Transverse colon (tissue), 4 donors: ENCODE measurements at regions of chr1 and their contacts with region 1.

Region 1: DNA sequence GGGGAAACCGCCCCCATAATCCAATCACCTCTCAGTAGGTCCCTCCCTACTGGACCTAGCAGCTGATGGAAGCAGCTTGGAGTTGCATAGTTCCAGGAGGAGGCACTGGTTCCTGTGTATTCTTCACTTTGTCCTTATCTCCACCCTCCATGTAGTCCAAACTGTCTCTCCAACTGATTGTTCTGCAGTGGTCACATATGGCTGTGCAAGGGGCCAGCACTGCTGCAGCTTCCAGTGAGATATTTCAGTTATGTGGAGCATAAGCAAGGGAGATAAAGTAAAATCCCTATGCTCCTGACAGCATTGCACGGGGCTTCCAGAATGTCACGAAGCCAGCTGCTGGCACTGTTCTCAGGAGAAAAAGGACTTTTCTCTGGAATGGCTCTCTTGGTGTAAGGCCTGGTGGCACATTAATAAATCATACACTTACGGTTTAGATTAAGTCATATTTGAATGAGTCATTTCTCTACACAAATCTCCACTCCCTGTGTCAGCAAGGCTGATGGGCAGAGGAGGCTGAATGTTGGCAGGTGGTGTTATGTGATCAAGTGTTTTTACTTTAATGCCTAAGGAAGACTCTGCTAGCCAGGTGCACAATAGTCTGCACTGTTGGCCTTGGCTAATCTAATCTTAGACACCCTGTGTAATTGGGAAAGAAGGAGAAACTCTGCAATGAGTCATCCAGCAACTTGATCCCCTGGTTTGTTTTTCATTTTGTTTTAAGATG is 93.4 kb downstream of the KCNK1 start:
- DNase-seq: no peak
- H3K4me3 ChIP-seq: no peak overlapping the region
- H3K27ac ChIP-seq: no peak overlapping the region
- H3K4me1 ChIP-seq: peaks cover 0 to 9% (median 7%) of the 10 kb centered on the region in 4 donors
- H3K27me3 ChIP-seq: no peaks in the 10 kb centered on the region
- CTCF ChIP-seq: no peak
- EP300 ChIP-seq: no peak
- POLR2A ChIP-seq: no peak

Region 2: DNA sequence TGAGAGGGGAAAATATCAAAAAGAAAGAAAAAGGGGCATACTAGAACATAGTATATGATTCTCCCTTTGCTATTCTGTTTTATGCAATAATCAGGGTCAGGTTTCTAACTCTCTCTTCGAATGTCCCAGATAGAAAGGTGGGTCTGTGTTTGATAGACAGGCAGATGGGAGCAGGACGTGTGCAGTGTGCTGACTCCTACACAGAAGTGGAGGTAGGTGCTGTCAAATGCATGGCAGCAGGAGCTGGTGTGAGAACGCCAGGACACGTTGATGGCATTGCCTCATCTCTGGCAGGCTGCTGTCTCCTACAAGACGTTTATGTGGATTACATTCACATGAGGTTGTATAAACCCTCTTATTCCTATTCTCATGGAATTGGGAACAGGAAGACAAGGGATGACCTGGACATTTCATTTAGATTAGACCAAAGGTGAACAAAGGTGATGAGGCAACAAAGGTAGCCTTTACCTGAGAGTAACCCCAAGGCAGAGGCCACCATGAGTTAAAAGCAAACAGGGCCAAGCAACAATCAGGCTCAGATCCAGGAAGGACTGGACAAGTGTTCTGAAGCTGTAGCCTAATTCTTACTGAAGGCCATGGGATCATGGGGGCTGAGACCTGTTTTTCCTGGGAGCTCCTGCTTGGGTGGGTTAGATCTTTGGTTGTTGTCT is 55.6 kb before region 1 on chr1:
- in situ Hi-C with region 1: no loop called
- intact Hi-C with region 1: loop called (anchors 1 kb)
- DNase-seq: no peak
- H3K4me3 ChIP-seq: no peak overlapping the region
- H3K27ac ChIP-seq: no peak overlapping the region
- H3K4me1 ChIP-seq: peaks cover 0 to 27% (median 2%) of the 10 kb centered on the region in 4 donors
- H3K27me3 ChIP-seq: no peaks in the 10 kb centered on the region
- CTCF ChIP-seq: no peak
- EP300 ChIP-seq: no peak
- POLR2A ChIP-seq: no peak

Region 3: GRCh38 chr1:234154320-234155251 is 447.3 kb after region 1 on chr1:
- in situ Hi-C with region 1: no loop called
- intact Hi-C with region 1: no loop called
- DNase-seq: no peak
- H3K4me3 ChIP-seq: no peak overlapping the region
- H3K27ac ChIP-seq: no peak overlapping the region
- H3K4me1 ChIP-seq: no peaks in the 10 kb centered on the region
- H3K27me3 ChIP-seq: no peaks in the 10 kb centered on the region
- CTCF ChIP-seq: peak; percentile 59 to 81 (median 69)
- EP300 ChIP-seq: no peak
- POLR2A ChIP-seq: no peak